CD14-positive monocyte (primary cell): ENCODE measurements at regions of chr3 and their contacts with region 1.

Region 1: DNA sequence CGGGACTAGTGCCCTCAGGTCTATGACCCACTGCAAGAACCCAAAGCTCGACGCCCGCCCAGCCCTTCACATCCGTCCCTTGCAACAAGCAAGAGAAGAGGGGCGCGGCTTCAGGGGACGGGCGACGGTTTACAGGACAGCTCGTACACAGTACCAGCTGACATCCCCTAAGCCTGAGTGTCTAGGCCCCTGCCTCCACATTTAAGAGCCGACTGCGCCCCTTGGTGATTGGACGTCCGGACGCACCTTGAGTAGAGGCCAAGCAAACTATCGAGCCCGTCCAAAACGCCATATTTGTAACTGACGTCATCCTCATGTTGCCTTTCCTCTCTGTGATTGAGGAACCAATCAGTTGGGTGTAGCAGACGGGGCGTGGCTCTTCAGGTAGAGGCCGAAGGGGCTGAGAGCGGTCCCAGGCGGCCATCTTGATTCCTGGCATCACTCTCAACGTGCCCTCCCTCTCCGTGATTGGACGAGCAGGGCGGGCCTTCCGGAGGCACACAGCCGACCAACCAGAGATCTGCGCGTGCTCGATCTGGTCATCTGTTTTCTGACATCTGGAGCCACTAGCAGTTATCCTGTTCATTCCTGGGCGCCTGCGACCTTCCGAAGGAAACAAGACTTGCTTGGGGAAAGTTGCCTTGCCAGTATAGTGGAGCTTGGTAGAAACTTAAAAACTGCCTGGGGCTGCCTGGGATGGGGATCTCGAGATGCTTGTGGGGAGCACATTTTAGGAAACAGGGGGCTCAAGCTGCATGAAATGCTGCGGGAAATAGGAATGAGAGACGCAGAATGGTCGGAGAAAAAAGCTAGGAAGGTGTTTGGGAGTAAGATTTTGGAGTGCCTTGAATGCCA is 4.0 kb upstream of the RPL14 start:
- DNase-seq: peak; percentile 98 to 99 (median 99)
- H3K4me3 ChIP-seq: peak overlapping the region; percentile 75 to 94 (median 82)
- H3K4me3 Mint-ChIP-seq: peak overlapping the region; percentile 87 to 93
- H3K27ac ChIP-seq: peak overlapping the region; percentile 79 to 94
- H3K27ac Mint-ChIP-seq: peak overlapping the region; percentile 95 to 99 (median 98)
- H3K4me1 ChIP-seq: peaks cover 29 to 38% of the 10 kb centered on the region in 2 donors
- H3K4me1 Mint-ChIP-seq: peaks cover 24% of the 10 kb centered on the region
- H3K27me3 ChIP-seq: no peaks in the 10 kb centered on the region
- H3K27me3 Mint-ChIP-seq: no peaks in the 10 kb centered on the region
- CTCF ChIP-seq: no peak

Region 2: DNA sequence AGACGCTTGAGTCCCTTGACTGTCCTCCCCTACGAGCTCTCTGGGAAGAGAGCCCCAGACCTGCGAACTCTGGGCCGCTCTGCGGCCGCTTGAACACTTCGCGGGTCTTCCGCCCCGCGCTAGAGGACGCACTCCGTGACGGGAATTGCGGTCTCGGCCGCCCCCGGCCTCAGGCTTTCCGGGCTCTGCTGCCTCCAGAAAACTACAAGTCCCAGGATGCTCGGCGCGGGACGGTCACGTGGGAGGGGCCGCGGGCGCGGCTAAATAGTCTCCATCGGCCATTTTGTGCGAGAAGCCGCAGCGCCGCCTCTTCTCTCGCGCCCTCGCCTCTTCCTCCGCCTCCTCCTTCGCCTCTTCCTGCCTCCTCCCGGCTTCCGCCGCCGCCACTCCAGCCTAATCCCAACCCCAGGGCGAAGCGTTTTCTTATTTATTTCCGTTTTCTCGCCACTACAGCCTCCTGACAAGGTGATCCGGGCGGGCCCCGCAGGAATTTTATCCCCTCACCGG is 143.6 kb before region 1 on chr3 and contains the start of gene EIF1B:
- intact Hi-C with region 1: loop called (anchors 5 to 10 kb)
- DNase-seq: peak; percentile 95 to 97 (median 97)
- H3K4me3 ChIP-seq: peak within 1 kb of the TSS; percentile 80 to 94 (median 93)
- H3K4me3 Mint-ChIP-seq: peak within 1 kb of the TSS; percentile 98 to 99
- H3K27ac ChIP-seq: peak within 1 kb of the TSS; percentile 92 to 93
- H3K27ac Mint-ChIP-seq: peak within 1 kb of the TSS; percentile 97 to 100 (median 99)
- H3K4me1 ChIP-seq: peaks cover 33 to 42% of the 10 kb centered on the region in 2 donors
- H3K4me1 Mint-ChIP-seq: peaks cover 36% of the 10 kb centered on the region
- H3K27me3 ChIP-seq: no peaks in the 10 kb centered on the region
- H3K27me3 Mint-ChIP-seq: no peaks in the 10 kb centered on the region
- CTCF ChIP-seq: peak; percentile 94
- polyA plus RNA-seq, gene EIF1B: 51.8 to 95.4 (median 70.8) TPM

Region 3: GRCh38 chr3:41961750-41962679 is 1508.9 kb after region 1 on chr3 and contains the start of gene ULK4:
- intact Hi-C with region 1: loop called in 1 of 2 experiments (anchors 10 kb)
- DNase-seq: peak; percentile 99 to 100 (median 99)
- H3K4me3 ChIP-seq: peak within 1 kb of the TSS; percentile 61 to 100 (median 82)
- H3K4me3 Mint-ChIP-seq: peak within 1 kb of the TSS; percentile 99
- H3K27ac ChIP-seq: peak within 1 kb of the TSS; percentile 47 to 87
- H3K27ac Mint-ChIP-seq: peak within 1 kb of the TSS; percentile 91 to 98 (median 96)
- H3K4me1 ChIP-seq: peaks cover 13 to 18% of the 10 kb centered on the region in 2 donors
- H3K4me1 Mint-ChIP-seq: peaks cover 17% of the 10 kb centered on the region
- H3K27me3 ChIP-seq: no peaks in the 10 kb centered on the region
- H3K27me3 Mint-ChIP-seq: no peaks in the 10 kb centered on the region
- CTCF ChIP-seq: no peak
- polyA plus RNA-seq, gene ULK4: 6.7 to 14.0 (median 11.8) TPM